ENCODE measurements at regions of chr5 and their contacts with region 1.

Region 1: GRCh38 chr5:126544087-126544740 is 50.8 kb downstream of the ALDH7A1 start:
- DNase-seq: no peak
- H3K4me3 ChIP-seq: no peak overlapping the region
- CTCF ChIP-seq: peak; percentile 76

Region 2: DNA sequence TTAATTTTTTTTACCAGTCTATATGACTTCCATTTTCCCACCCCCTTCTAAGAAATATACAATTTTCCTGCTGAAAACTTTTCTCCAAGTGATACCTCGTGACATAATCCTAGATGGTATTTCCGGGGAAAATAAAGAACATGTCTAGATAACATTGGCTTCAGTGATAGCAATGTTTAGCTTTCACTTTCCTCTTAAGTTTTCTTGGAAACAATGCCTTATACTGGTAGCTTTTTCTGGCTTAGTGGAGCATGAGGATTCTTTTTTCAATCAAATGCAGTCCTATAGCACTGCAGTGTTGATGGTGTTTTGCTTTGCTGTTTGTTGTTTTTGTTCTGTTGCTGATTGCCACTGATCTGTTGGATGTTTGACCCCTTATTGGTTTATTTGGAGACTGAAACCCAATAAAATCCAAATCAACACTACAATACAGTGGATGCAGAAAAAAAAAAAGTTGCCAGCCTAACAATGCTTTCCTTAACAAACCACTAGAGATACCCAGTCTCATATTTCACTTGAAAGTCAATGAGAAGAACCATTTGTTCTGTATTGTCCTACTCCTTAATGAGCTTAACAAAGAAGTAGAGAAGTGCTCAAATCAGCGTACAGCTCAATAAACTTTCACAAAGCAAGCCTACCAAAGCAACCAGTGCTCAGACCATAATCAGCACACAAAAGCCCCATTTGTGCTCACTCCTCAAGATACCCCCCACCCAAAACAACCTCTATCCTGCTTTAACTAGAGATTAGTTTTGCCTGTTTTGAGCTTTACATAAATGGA is 195.2 kb before region 1 on chr5:
- in situ Hi-C with region 1: loop called (anchors 10 kb)
- DNase-seq: no peak
- H3K4me3 ChIP-seq: no peak overlapping the region
- CTCF ChIP-seq: no peak

Region 3: GRCh38 chr5:126624534-126624933 is 80.3 kb after region 1 on chr5:
- in situ Hi-C with region 1: no loop called
- DNase-seq: peak; percentile 84
- H3K4me3 ChIP-seq: no peak overlapping the region
- CTCF ChIP-seq: no peak

Region 4: GRCh38 chr5:127112351-127112864 is 568.2 kb after region 1 on chr5:
- in situ Hi-C with region 1: no loop called
- DNase-seq: peak; percentile 41
- H3K4me3 ChIP-seq: no peak overlapping the region
- CTCF ChIP-seq: no peak

Region 5: GRCh38 chr5:127229185-127229889 is 685.1 kb after region 1 on chr5:
- in situ Hi-C with region 1: no loop called
- DNase-seq: peak; percentile 33
- H3K4me3 ChIP-seq: peak overlapping the region; percentile 48
- CTCF ChIP-seq: no peak

Measured in astrocyte of the spinal cord (primary cell).